Activated B cell treated with CpG ODN at 0.5 μM for 24 hours (primary cell): ENCODE measurements at regions of chr17 and their contacts with region 1.

Region 1: GRCh38 chr17:63984651-63985386 is 12.1 kb upstream of the SCN4A start:
- DNase-seq: no peak
- ATAC-seq: peak; percentile 89
- H3K4me3 Mint-ChIP-seq: no peak overlapping the region
- H3K27ac Mint-ChIP-seq: no peak overlapping the region
- H3K4me1 Mint-ChIP-seq: peaks cover 16% of the 10 kb centered on the region
- H3K27me3 Mint-ChIP-seq: no peaks in the 10 kb centered on the region
- CTCF ChIP-seq: no peak

Region 2: GRCh38 chr17:63904316-63904715 is 80.5 kb before region 1 on chr17:
- CTCF ChIA-PET with region 1: interaction called, 10 read pairs
- POLR2A ChIA-PET with region 1: no interaction called
- intact Hi-C with region 1: no loop called
- DNase-seq: peak; percentile 10
- ATAC-seq: no peak
- H3K4me3 Mint-ChIP-seq: no peak overlapping the region
- H3K27ac Mint-ChIP-seq: no peak overlapping the region
- H3K4me1 Mint-ChIP-seq: peaks cover 4% of the 10 kb centered on the region
- H3K27me3 Mint-ChIP-seq: no peaks in the 10 kb centered on the region
- CTCF ChIP-seq: no peak